CD8-positive, alpha-beta T cell (primary cell): ENCODE measurements at regions of chr9 and their contacts with region 1.

Region 1: DNA sequence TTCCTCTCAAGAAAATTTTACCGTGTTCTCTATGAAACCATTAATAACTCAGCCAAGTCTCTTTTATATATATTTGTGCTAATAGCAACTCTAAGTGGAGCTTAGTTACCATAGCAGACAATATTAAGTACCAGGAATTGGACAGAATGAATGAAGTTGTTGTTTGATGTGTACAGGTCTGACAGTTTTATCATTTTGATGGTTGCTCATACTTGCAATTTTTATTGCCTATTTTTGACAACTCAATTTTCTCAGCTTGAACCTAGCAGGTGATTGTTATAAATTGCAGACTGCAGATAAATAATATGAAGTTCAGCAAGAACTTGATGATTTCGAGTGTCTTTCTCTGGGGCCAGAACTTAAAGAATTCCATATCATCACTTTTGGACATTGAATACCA is 163.2 kb downstream of the PLPPR1 start:
- DNase-seq: no peak
- ATAC-seq: no peak
- H3K4me3 ChIP-seq: no peak overlapping the region
- H3K4me3 Mint-ChIP-seq: no peak overlapping the region
- H3K27ac ChIP-seq: no peak overlapping the region
- H3K27ac Mint-ChIP-seq: no peak overlapping the region
- H3K4me1 ChIP-seq: no peaks in the 10 kb centered on the region
- H3K4me1 Mint-ChIP-seq: no peaks in the 10 kb centered on the region
- H3K27me3 ChIP-seq: no peaks in the 10 kb centered on the region
- H3K27me3 Mint-ChIP-seq: peaks cover 4% of the 10 kb centered on the region
- CTCF ChIP-seq: no peak

Region 2: DNA sequence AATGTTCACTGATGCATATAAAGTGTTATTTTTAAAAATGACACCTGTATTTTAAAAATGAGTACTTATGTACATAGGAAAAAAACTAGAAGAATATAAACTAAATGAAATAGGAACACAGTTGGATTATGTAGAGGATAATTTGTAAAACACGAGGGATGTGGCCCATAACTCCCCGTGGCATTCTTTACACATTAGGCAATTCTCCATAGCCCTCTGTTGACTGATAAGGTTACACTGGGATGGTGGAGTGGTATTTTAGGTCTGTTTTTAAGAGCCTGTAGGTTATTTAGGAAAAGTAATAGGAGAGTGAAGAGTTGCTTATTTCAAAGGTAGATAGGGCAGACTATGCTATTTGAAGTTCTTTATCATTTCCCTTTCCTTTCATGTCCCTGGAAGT is 612.1 kb before region 1 on chr9:
- CTCF ChIA-PET with region 1: no interaction called
- POLR2A ChIA-PET with region 1: no interaction called
- intact Hi-C with region 1: loop called in 1 of 2 experiments (anchors 5 kb)
- DNase-seq: no peak
- ATAC-seq: no peak
- H3K4me3 ChIP-seq: no peak overlapping the region
- H3K4me3 Mint-ChIP-seq: no peak overlapping the region
- H3K27ac ChIP-seq: no peak overlapping the region
- H3K27ac Mint-ChIP-seq: no peak overlapping the region
- H3K4me1 ChIP-seq: no peaks in the 10 kb centered on the region
- H3K4me1 Mint-ChIP-seq: no peaks in the 10 kb centered on the region
- H3K27me3 ChIP-seq: no peaks in the 10 kb centered on the region
- H3K27me3 Mint-ChIP-seq: no peaks in the 10 kb centered on the region
- CTCF ChIP-seq: no peak